ENCODE measurements at regions of chr9 and their contacts with region 1.

Region 1: DNA sequence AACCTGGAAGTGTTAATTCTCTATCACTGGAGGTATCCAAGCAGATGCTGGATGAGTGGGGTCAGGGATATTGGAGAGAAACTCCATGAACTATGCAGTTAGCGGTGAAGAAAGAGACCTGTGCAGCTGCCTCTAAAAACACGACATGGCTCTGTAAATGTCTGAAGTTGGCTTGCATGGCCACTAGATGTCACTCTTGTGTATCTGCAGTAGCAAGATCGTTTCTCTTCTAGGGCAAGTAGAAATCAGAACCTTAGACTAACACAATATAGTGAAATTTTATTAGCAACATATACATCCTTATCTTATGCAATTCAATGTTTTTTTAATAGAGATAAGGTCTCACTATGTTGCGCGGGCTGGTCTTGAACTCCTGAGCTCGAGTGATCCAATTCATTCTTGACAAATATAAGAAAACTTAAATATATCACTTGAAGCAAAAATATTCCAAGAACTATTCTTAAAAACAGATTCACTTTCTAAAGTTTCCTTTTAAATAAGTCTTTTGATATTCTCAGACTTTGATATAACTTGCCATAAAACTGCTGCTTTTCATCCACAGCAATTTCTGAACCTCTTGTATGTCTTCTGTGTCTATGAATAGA is 2.9 kb downstream of the OR2S2 start:
- DNase-seq: no peak
- ATAC-seq: peak; percentile 65

Region 2: GRCh38 chr9:36008774-36009300 is 53.8 kb after region 1 on chr9:
- intact Hi-C with region 1: loop called (anchors 5 kb)
- DNase-seq: peak; percentile 52
- ATAC-seq: peak; percentile 91

Region 3: GRCh38 chr9:36023260-36024048 is 68.4 kb after region 1 on chr9:
- intact Hi-C with region 1: loop called (anchors 1 kb)
- DNase-seq: peak; percentile 51
- ATAC-seq: peak; percentile 34

Measured in Right ventricle myocardium inferior (tissue), 1 donor.